ENCODE measurements at regions of chr5 and their contacts with region 1.

Region 1: GRCh38 chr5:141951332-141951781 is 6.6 kb downstream of the PCDH12 start:
- DNase-seq: no peak
- H3K4me3 Mint-ChIP-seq: no peak overlapping the region
- H3K27ac Mint-ChIP-seq: no peak overlapping the region
- H3K4me1 Mint-ChIP-seq: no peaks in the 10 kb centered on the region
- H3K27me3 Mint-ChIP-seq: no peaks in the 10 kb centered on the region
- CTCF ChIP-seq: peak; percentile 26

Region 2: GRCh38 chr5:141908796-141909195 is 42.6 kb before region 1 on chr5:
- CTCF ChIA-PET with region 1: no interaction called
- POLR2A ChIA-PET with region 1: no interaction called
- intact Hi-C with region 1: no loop called
- DNase-seq: peak; percentile 37
- H3K4me3 Mint-ChIP-seq: no peak overlapping the region
- H3K27ac Mint-ChIP-seq: no peak overlapping the region
- H3K4me1 Mint-ChIP-seq: peaks cover 16% of the 10 kb centered on the region
- H3K27me3 Mint-ChIP-seq: no peaks in the 10 kb centered on the region
- CTCF ChIP-seq: no peak

Region 3: GRCh38 chr5:141940695-141941271 is 10.6 kb before region 1 on chr5:
- CTCF ChIA-PET with region 1: interaction called, 155 read pairs
- POLR2A ChIA-PET with region 1: interaction called, 14 read pairs
- intact Hi-C with region 1: no loop called
- DNase-seq: no peak
- H3K4me3 Mint-ChIP-seq: no peak overlapping the region
- H3K27ac Mint-ChIP-seq: peak overlapping the region; percentile 28
- H3K4me1 Mint-ChIP-seq: peaks cover 9% of the 10 kb centered on the region
- H3K27me3 Mint-ChIP-seq: no peaks in the 10 kb centered on the region
- CTCF ChIP-seq: no peak